ENCODE measurements at regions of chr6 and their contacts with region 1.

Region 1: GRCh38 chr6:41066867-41067304 is 5.3 kb downstream of the OARD1 start:
- DNase-seq: peak; percentile 78 to 87
- ATAC-seq: peak; percentile 17

Region 2: GRCh38 chr6:40678941-40679340 is 387.9 kb before region 1 on chr6:
- intact Hi-C with region 1: no loop called
- DNase-seq: no peak
- ATAC-seq: no peak

Region 3: GRCh38 chr6:40936818-40937251 is 130.1 kb before region 1 on chr6:
- intact Hi-C with region 1: no loop called
- DNase-seq: no peak
- ATAC-seq: no peak

Region 4: DNA sequence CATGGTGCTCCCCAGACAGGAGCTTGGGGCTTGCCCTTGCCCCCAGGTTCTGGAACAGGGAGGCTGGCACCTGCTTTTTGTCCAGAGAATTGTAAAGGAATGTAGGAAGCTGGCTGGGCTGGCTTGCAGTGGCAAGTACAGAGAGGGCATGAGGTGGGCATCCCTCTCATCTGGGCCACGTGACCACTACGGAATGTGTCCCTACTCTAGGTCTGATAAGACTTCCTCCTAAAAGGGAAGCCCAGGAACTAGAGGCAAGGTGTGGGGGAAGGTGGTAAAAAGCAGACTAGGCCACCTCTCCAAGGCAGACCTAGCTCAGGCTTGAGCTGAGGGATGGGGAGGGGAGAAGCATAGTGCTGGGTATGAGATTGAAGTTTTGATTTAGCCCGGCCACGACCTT is 66.6 kb before region 1 on chr6:
- intact Hi-C with region 1: loop called in 1 of 2 experiments (anchors 10 kb)
- DNase-seq: no peak
- ATAC-seq: no peak

Region 5: GRCh38 chr6:41228616-41229015 is 161.7 kb after region 1 on chr6:
- intact Hi-C with region 1: no loop called
- DNase-seq: no peak
- ATAC-seq: no peak